PC-9 (cell line): ENCODE measurements at regions of chr9 and their contacts with region 1.

Region 1: GRCh38 chr9:20622330-20623020 is at the start of gene MLLT3:
- DNase-seq: peak; percentile 77 to 89
- H3K4me3 ChIP-seq: peak within 1 kb of the TSS; percentile 96
- H3K27ac ChIP-seq: peak within 1 kb of the TSS; percentile 63
- H3K4me1 ChIP-seq: peaks cover 23% of the 10 kb centered on the region
- H3K27me3 ChIP-seq: peaks cover 8% of the 10 kb centered on the region; the same call in 1 of the 2 replicates
- CTCF ChIP-seq: no peak
- total RNA-seq, gene MLLT3: 21.6 and 21.7 TPM in 2 replicates

Region 2: DNA sequence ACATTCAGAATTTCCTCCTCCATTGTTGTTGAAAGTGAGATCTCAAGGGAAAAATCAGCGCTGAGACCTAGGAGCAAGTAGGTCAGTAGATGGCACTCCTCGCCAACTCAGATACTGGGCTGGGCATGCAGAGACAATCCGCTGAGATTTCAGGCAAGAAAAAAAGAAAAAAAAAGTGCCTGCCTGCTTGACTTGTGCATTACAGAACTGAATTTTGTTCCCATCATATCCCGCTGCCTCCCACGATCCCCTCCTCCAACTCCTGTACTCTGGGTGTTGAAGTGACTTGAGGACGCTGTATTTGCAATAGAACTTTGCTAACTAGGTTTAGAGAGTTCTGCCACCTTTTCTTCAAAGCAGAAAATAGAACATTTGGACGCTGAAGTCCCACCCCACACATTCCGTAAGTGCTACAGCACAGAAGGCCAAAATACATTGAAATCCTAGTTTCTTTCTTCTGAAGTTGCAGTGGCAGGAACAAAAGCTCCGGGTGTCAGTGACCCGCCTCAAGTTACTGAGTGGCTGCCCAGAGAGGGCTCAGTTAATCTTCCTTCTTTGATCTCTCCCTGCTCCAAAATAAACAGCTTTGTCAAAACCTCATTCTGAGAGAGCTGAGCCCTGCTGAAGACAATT is 266.0 kb before region 1 on chr9:
- CTCF ChIA-PET with region 1: interaction called, 3 read pairs
- POLR2A ChIA-PET with region 1: no interaction called
- intact Hi-C with region 1: loop called (anchors 1 kb)
- DNase-seq: peak; percentile 56 to 66
- H3K4me3 ChIP-seq: peak overlapping the region; percentile 30; the same call in 1 of the 2 replicates
- H3K27ac ChIP-seq: peak overlapping the region; percentile 51
- H3K4me1 ChIP-seq: peaks cover 24% of the 10 kb centered on the region
- H3K27me3 ChIP-seq: no peaks in the 10 kb centered on the region
- CTCF ChIP-seq: peak; percentile 74

Region 3: GRCh38 chr9:20512106-20512505 is 110.4 kb before region 1 on chr9:
- CTCF ChIA-PET with region 1: no interaction called
- POLR2A ChIA-PET with region 1: no interaction called
- intact Hi-C with region 1: loop called (anchors 2 kb)
- DNase-seq: peak; percentile 49 to 80
- H3K4me3 ChIP-seq: no peak overlapping the region
- H3K27ac ChIP-seq: peak overlapping the region; percentile 77
- H3K4me1 ChIP-seq: peaks cover 20% of the 10 kb centered on the region
- H3K27me3 ChIP-seq: no peaks in the 10 kb centered on the region
- CTCF ChIP-seq: no peak

Region 4: DNA sequence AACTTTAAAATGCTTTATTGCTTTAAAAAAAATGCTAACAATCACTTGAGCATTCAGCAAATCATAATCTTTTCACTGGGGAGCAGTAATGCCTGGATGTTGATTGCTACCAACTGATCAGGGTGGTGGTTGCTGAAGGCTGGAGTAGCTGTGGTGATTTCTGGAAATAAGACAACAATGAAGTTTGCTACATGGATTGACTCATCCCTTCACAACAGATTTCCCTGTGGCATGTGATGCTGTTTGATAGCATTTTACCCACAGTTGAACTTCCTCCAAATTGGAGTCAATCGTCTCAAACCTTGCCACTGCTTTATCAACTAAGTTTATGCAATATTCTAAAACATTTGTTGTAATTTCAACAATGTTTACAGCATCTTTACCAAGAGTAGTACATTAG is 83.5 kb before region 1 on chr9:
- CTCF ChIA-PET with region 1: no interaction called
- POLR2A ChIA-PET with region 1: no interaction called
- intact Hi-C with region 1: no loop called
- DNase-seq: no peak
- H3K4me3 ChIP-seq: no peak overlapping the region
- H3K27ac ChIP-seq: no peak overlapping the region
- H3K4me1 ChIP-seq: no peaks in the 10 kb centered on the region
- H3K27me3 ChIP-seq: no peaks in the 10 kb centered on the region
- CTCF ChIP-seq: no peak

Region 5: GRCh38 chr9:20579524-20580314 is 42.8 kb before region 1 on chr9:
- CTCF ChIA-PET with region 1: interaction called, 3 read pairs
- POLR2A ChIA-PET with region 1: no interaction called
- intact Hi-C with region 1: loop called (anchors 1 kb)
- DNase-seq: peak in 1 of 2 experiments; percentile 63
- H3K4me3 ChIP-seq: no peak overlapping the region
- H3K27ac ChIP-seq: no peak overlapping the region
- H3K4me1 ChIP-seq: peaks cover 25% of the 10 kb centered on the region
- H3K27me3 ChIP-seq: no peaks in the 10 kb centered on the region
- CTCF ChIP-seq: no peak

Region 6: GRCh38 chr9:20728493-20729220 is 106.2 kb after region 1 on chr9:
- CTCF ChIA-PET with region 1: no interaction called
- POLR2A ChIA-PET with region 1: no interaction called
- intact Hi-C with region 1: loop called (anchors 10 kb)
- DNase-seq: no peak
- H3K4me3 ChIP-seq: no peak overlapping the region
- H3K27ac ChIP-seq: no peak overlapping the region
- H3K4me1 ChIP-seq: no peaks in the 10 kb centered on the region
- H3K27me3 ChIP-seq: no peaks in the 10 kb centered on the region
- CTCF ChIP-seq: no peak

Region 7: DNA sequence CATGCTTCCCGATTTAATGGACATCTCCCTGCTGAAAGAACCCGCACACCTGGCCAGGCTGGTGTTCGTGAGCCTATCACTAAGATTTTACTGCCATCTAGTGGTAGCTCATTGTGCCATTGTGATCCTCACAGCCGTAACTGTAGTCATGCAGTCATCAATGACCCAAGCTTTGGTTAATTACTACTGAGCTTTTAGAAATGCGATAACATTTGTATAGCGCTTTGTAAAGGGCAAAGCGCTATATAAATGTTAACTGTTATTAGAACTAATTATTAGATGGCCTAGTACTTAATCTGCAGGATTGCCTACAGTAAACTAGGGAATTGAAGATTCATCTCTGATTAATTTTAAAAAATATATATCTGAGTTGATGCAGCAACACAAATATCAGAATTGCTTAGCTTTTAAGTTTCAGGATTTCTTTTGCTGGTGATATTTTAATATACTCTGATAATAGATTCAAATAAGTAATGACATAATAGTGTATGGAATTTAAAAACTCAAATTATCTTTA is 318.8 kb after region 1 on chr9:
- CTCF ChIA-PET with region 1: interaction called, 5 read pairs
- POLR2A ChIA-PET with region 1: no interaction called
- intact Hi-C with region 1: loop called (anchors 1 kb)
- DNase-seq: peak; percentile 34
- H3K4me3 ChIP-seq: no peak overlapping the region
- H3K27ac ChIP-seq: no peak overlapping the region
- H3K4me1 ChIP-seq: no peaks in the 10 kb centered on the region
- H3K27me3 ChIP-seq: no peaks in the 10 kb centered on the region
- CTCF ChIP-seq: peak; percentile 82